Activated CD8-positive, alpha-beta memory T cell treated with anti-CD3 and anti-CD28 coated beads, Interleukin-2, amount 10 ng/mL, durations not matched to agents 7 days and 5 days (primary cell): ENCODE measurements at regions of chr19 and their contacts with region 1.

Region 1: DNA sequence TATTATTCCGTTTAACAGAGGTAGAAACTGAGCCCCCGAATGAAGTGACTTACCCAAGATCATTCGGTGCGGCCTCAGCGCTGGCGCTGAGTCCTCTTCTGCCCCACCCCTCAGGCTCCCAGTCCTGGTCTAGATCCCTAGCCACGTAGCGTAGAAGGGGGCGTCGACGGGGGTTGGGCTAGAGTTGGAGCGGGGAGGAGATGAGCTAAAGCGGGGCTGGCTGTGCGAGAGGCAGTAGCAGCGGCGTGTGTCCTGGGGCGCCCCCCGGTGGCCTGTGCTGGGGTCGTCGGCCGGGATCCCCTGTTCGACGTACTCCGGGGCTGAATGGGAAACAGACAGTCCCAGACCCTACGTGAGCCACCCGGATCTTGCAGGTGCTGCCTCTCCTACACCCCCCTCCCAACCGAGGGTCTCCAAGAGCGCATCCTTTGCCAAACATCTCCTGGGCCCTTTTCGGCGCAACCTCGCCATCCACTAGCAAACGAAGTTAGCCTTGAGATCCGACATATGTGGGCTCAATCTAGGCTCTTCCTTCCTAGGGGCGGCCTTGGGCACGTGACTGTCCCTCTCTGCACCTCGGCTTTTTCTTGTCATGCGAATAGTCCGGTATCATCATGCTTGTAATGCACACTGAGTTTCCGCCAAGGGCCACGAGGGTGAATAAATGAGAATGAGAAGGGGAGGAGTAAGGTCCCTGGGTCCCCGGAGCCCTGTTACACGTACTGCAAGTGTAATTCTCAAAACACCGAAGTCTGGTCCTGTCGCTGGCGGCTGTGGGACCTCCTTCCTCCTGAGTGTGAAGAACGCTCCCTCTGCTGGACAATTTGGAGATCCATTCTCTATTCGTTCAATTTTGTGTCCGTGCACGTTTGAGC is 47.7 kb downstream of the CYP4F22 start:
- DNase-seq: peak; percentile 98
- ATAC-seq: peak; percentile 84
- H3K4me3 Mint-ChIP-seq: peak overlapping the region; percentile 78
- H3K27ac Mint-ChIP-seq: peak overlapping the region; percentile 81
- H3K4me1 Mint-ChIP-seq: peaks cover 24% of the 10 kb centered on the region
- H3K27me3 Mint-ChIP-seq: peaks cover 3% of the 10 kb centered on the region

Region 2: GRCh38 chr19:15177269-15178116 is 378.5 kb before region 1 on chr19:
- CTCF ChIA-PET with region 1: interaction called, 10 read pairs
- DNase-seq: peak; percentile 85
- ATAC-seq: peak; percentile 95
- H3K4me3 Mint-ChIP-seq: no peak overlapping the region
- H3K27ac Mint-ChIP-seq: no peak overlapping the region
- H3K4me1 Mint-ChIP-seq: peaks cover 4% of the 10 kb centered on the region
- H3K27me3 Mint-ChIP-seq: peaks cover 4% of the 10 kb centered on the region

Region 3: GRCh38 chr19:15418588-15419412 is 137.2 kb before region 1 on chr19 and contains the start of gene AKAP8L:
- CTCF ChIA-PET with region 1: interaction called, 198 read pairs
- DNase-seq: peak; percentile 100
- ATAC-seq: peak; percentile 98
- H3K4me3 Mint-ChIP-seq: peak within 1 kb of the TSS; percentile 92
- H3K27ac Mint-ChIP-seq: peak within 1 kb of the TSS; percentile 94
- H3K4me1 Mint-ChIP-seq: peaks cover 36% of the 10 kb centered on the region
- H3K27me3 Mint-ChIP-seq: no peaks in the 10 kb centered on the region
- total RNA-seq, gene AKAP8L: 105 to 116 TPM

Region 4: DNA sequence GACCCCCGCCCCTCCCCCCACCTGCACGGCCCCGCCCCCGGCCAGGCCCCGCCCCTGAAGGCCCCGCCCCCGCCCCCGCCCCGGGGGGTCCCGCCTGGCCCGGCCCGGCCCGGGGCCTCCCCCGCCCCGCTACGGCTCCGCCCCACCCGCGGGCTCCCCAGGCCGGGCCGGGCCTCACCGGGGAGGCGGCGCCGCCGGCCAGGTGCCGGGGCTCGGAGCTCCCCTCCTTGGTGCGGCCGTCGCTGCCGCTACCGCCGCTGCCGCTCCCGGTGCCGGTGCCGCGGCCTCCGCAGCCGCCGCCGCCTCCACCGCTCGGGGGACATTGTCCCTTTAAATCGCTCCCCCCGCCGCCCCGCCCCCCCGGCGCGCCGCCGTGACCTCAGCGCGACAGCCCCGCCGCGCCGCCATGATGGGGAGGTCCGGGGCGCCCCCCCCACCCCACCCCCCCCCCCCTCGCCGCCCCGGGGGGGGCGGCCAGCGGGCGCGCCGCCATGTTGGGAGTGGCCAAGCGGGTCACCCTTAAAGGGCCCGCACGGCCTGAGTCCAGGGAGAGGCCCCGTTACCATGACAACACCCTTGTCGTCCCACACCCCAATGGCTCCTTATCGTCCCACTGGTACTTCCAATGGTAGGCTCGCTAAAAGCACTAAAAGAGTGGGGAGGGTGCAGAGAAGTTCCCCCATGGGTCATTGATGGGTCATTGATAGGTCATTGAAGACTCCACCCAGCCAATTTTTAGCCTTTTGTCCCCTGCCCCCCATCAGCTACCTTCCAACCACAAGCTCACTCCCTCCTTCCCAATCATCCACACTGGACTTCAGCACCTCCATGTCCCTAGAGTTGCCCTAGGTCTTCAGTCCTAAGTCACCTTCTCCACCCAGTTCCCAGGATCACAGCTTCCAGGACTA is 106.1 kb before region 1 on chr19 and contains the start of gene WIZ:
- CTCF ChIA-PET with region 1: interaction called, 10 read pairs
- DNase-seq: peak; percentile 87
- ATAC-seq: peak; percentile 77
- H3K4me3 Mint-ChIP-seq: peak within 1 kb of the TSS; percentile 49
- H3K27ac Mint-ChIP-seq: peak within 1 kb of the TSS; percentile 69
- H3K4me1 Mint-ChIP-seq: peaks cover 16% of the 10 kb centered on the region
- H3K27me3 Mint-ChIP-seq: no peaks in the 10 kb centered on the region
- total RNA-seq, gene WIZ: 29.9 to 30.8 TPM

Region 5: DNA sequence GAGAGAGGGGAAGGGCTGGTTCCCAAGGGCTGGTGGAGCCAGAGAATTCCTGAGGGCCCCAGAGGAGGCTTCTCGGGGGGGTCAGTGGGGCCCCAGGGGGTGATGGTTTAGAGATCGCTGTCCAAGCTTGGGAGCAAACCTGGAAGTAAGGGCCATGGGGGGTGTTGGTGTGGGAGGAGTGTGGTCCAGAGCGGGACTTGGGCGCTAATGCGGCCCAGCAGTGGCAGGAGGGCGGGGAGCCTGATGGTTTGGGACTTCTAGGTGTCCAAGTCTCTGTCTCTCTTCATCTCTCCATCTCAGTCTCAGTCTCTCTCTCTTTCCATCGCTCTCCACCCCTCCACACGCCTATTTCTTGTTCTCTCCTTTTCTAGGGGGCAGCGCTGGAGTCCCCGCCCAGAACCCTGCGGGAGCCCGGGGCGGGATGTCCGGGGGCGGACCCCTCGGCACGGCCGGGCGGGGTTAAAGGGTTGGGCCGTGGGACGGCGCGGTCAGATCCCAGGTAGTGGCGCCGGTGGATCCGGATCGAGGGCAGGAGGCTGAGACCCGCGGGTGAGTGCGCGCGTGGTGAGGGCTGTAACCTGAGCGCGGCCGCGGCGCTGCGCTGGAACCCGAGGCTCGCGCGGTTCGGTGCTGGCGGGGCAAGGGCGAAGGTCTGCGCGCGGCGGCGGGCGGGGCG is 47.8 kb before region 1 on chr19 and contains the start of gene CYP4F22:
- CTCF ChIA-PET with region 1: interaction called, 13 read pairs
- DNase-seq: no peak
- ATAC-seq: peak; percentile 79
- H3K4me3 Mint-ChIP-seq: peak within 1 kb of the TSS; percentile 68
- H3K27ac Mint-ChIP-seq: peak within 1 kb of the TSS; percentile 8
- H3K4me1 Mint-ChIP-seq: peaks cover 24% of the 10 kb centered on the region
- H3K27me3 Mint-ChIP-seq: peaks cover 42% of the 10 kb centered on the region
- total RNA-seq, gene CYP4F22: 1.2 to 1.9 TPM